Sciatic nerve (tissue), 2 donors: ENCODE measurements at regions of chr6 and their contacts with region 1.

Region 1: GRCh38 chr6:16973545-16974386 is 128.1 kb upstream of the STMND1 start:
- DNase-seq: no peak
- ATAC-seq: no peak

Region 2: GRCh38 chr6:15905488-15906440 is 1068.0 kb before region 1 on chr6:
- intact Hi-C with region 1: no loop called
- DNase-seq: no peak
- ATAC-seq: no peak

Region 3: DNA sequence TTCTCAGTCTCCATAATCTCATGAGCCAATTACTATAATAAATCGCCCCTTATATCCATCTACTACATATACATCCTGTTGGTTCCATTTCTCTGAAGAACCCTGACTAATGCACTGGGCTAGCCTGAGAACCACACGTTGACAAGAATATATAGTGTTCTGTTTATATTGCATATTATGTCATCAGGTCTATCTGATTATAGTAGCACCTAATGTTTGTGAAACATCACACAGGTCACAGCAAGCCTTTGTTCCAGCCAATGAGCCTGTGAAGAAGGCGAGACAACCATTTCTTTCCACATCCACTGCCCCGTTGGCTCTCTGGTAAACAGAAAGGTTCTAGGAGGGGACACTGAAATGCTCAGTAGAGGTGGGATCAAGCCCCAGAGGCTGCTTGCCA is 56.3 kb after region 1 on chr6:
- intact Hi-C with region 1: loop called (anchors 1 kb)
- DNase-seq: no peak
- ATAC-seq: no peak